ENCODE measurements at regions of chr16 and their contacts with region 1.

Region 1: DNA sequence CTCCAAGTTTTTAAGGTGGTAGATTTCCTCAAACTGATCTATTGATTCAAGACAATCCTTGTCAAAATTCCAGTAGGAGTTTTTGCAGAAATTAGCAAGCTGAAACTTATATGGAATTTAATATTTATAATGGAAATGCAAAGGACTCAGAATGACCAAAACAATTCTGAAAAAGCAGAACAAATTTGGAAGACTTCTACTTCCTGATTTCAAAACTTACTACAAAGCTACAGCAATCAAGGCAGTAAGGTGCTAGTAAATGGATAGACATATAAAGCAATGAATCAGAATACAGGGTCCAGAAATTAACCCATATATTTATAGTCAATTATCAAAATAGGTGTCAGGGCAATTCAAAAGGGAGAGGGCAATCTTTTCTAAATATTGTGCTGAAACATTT is 11.8 kb upstream of the IL21R start:
- DNase-seq: no peak
- ATAC-seq: no peak
- H3K4me3 ChIP-seq: no peak overlapping the region
- H3K4me3 Mint-ChIP-seq: no peak overlapping the region
- H3K27ac ChIP-seq: no peak overlapping the region
- H3K27ac Mint-ChIP-seq: no peak overlapping the region
- H3K4me1 ChIP-seq: peaks cover 4% of the 10 kb centered on the region
- H3K4me1 Mint-ChIP-seq: peaks cover 23 to 33% of the 10 kb centered on the region in 2 donors
- H3K27me3 ChIP-seq: no peaks in the 10 kb centered on the region
- H3K27me3 Mint-ChIP-seq: no peaks in the 10 kb centered on the region
- CTCF ChIP-seq: no peak

Region 2: GRCh38 chr16:27242868-27243590 is 147.1 kb before region 1 on chr16:
- intact Hi-C with region 1: no loop called
- DNase-seq: peak in 1 of 2 donors; percentile 67
- ATAC-seq: peak; percentile 69 to 75 (median 73)
- H3K4me3 ChIP-seq: peak overlapping the region; percentile 17
- H3K4me3 Mint-ChIP-seq: peak overlapping the region; percentile 87
- H3K27ac ChIP-seq: peak overlapping the region; percentile 68
- H3K27ac Mint-ChIP-seq: peak overlapping the region; percentile 85 to 90
- H3K4me1 ChIP-seq: peaks cover 70% of the 10 kb centered on the region
- H3K4me1 Mint-ChIP-seq: peaks cover 51 to 56% of the 10 kb centered on the region in 2 donors
- H3K27me3 ChIP-seq: no peaks in the 10 kb centered on the region
- H3K27me3 Mint-ChIP-seq: no peaks in the 10 kb centered on the region
- CTCF ChIP-seq: no peak

Region 3: GRCh38 chr16:27273670-27274423 is 116.3 kb before region 1 on chr16:
- intact Hi-C with region 1: no loop called
- DNase-seq: peak in 1 of 2 donors; percentile 54
- ATAC-seq: peak in 2 of 3 donors; percentile 27 to 76
- H3K4me3 ChIP-seq: no peak overlapping the region
- H3K4me3 Mint-ChIP-seq: no peak overlapping the region
- H3K27ac ChIP-seq: peak overlapping the region; percentile 61
- H3K27ac Mint-ChIP-seq: peak overlapping the region; percentile 79 to 85
- H3K4me1 ChIP-seq: peaks cover 23% of the 10 kb centered on the region
- H3K4me1 Mint-ChIP-seq: peaks cover 17 to 24% of the 10 kb centered on the region in 2 donors
- H3K27me3 ChIP-seq: no peaks in the 10 kb centered on the region
- H3K27me3 Mint-ChIP-seq: no peaks in the 10 kb centered on the region
- CTCF ChIP-seq: no peak

Region 4: GRCh38 chr16:27413956-27414355 is 23.8 kb after region 1 on chr16:
- intact Hi-C with region 1: loop called (anchors 2 kb)
- DNase-seq: no peak
- ATAC-seq: no peak
- H3K4me3 ChIP-seq: no peak overlapping the region
- H3K4me3 Mint-ChIP-seq: no peak overlapping the region
- H3K27ac ChIP-seq: no peak overlapping the region
- H3K27ac Mint-ChIP-seq: peak overlapping the region; percentile 11 to 82
- H3K4me1 ChIP-seq: peaks cover 10% of the 10 kb centered on the region
- H3K4me1 Mint-ChIP-seq: peaks cover 55 to 64% of the 10 kb centered on the region in 2 donors
- H3K27me3 ChIP-seq: no peaks in the 10 kb centered on the region
- H3K27me3 Mint-ChIP-seq: no peaks in the 10 kb centered on the region
- CTCF ChIP-seq: no peak

Measured in natural killer cell (primary cell).